Right cardiac atrium (tissue), 5 donors: ENCODE measurements at regions of chrX and their contacts with region 1.

Region 1: GRCh38 chrX:129606918-129607317 is 47.8 kb downstream of the APLN start:
- DNase-seq: peak in 2 of 3 donors; percentile 36 to 66
- ATAC-seq: peak; percentile 50 to 69
- H3K4me3 ChIP-seq: no peak overlapping the region
- H3K27ac ChIP-seq: peak overlapping the region; percentile 17
- H3K4me1 ChIP-seq: peaks cover 3% of the 10 kb centered on the region
- H3K27me3 ChIP-seq: no peaks in the 10 kb centered on the region

Region 2: DNA sequence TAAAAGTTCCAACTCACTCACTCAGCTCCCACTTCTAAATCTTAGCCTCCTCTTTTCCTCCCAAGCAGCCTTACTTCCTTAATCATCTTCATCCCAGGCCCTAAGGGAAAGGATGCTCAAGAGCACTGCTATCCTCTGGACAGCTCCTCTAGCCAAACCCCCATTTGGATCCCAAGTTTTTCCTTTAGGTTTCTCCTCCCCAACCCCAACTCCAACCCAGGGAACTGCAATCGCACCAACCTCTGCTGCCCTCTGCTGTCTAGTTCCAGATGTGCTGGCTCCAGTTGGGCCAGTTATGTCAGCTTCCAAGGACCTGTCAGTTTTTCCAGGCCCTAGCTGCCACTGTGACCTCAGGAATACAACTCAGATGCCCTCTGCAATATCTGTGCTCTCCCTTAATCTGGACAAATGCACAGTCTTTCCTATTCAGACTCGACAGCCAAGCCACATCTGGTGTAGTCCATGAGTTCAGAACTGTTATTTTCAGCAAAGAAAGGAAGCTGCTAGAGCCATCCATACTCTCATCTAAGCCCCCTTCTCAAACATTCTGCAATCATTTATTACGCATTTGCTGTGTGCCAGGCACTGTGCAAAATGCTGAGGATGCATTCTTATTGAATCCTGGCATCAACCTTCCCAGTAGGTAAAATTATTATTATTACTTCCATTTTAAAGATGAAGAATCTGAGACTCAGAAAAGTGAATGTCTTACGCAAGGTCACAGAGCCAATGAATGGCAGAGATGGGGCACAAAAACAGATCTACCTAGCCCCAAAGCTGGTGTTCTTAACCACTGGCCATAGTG is 119.6 kb after region 1 on chrX:
- intact Hi-C with region 1: loop called in 2 of 4 experiments (anchors 5 to 10 kb)
- DNase-seq: peak; percentile 58 to 79 (median 72)
- ATAC-seq: peak; percentile 75 to 83
- H3K4me3 ChIP-seq: no peak overlapping the region
- H3K27ac ChIP-seq: no peak overlapping the region
- H3K4me1 ChIP-seq: no peaks in the 10 kb centered on the region
- H3K27me3 ChIP-seq: no peaks in the 10 kb centered on the region

Region 3: GRCh38 chrX:129823115-129823514 is 216.2 kb after region 1 on chrX:
- intact Hi-C with region 1: loop called in 1 of 4 experiments (anchors 5 kb)
- DNase-seq: peak in 1 of 3 donors; percentile 19
- ATAC-seq: peak in 1 of 2 donors; percentile 58
- H3K4me3 ChIP-seq: no peak overlapping the region
- H3K27ac ChIP-seq: no peak overlapping the region
- H3K4me1 ChIP-seq: no peaks in the 10 kb centered on the region
- H3K27me3 ChIP-seq: no peaks in the 10 kb centered on the region

Region 4: GRCh38 chrX:129843459-129844306 is 236.8 kb after region 1 on chrX and contains the start of gene ZDHHC9:
- intact Hi-C with region 1: loop called in 1 of 4 experiments (anchors 10 kb)
- DNase-seq: peak; percentile 88 to 94 (median 94)
- ATAC-seq: peak; percentile 98 to 99
- H3K4me3 ChIP-seq: peak within 1 kb of the TSS; percentile 68
- H3K27ac ChIP-seq: peak within 1 kb of the TSS; percentile 88
- H3K4me1 ChIP-seq: no peaks in the 10 kb centered on the region
- H3K27me3 ChIP-seq: no peaks in the 10 kb centered on the region
- total RNA-seq, gene ZDHHC9: 9.3 to 16.7 (median 11.3) TPM

Region 5: DNA sequence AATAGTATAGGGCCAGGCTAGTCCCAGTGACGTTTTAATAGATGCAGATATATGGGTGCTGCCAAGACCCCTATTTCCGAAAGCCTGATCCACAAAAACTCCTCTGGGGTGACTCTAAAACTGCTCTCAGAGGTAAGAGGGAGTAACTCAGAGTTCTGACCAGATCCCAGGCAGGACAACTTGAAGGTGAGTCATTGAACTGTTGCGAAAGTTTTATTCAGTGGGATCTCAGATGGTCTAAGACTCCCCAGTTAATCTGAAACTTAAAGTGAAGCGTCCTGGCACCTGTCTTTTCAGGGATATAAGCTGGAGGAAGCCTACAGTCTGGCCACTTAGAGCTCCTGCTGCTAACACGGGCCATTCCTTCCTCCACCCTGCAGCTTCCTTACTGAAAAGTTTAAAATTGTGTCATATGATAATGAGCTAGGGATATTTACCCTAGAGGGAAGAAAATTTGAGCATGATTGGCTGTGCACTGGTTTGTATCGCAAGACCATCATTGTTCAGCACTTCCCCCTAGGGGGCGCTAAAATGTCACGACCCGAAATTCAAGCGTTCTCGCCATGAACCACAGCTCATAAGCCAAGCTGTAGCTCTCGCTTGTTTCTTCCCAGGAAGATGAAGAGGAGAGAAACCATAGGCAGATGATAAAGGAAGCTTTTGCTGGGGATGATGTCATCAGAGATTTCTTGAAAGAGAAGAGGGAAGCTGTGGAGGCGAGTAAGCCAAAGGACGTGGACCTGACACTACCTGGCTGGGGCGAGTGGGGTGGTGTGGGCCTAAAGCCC is 318.6 kb after region 1 on chrX:
- intact Hi-C with region 1: loop called in 1 of 4 experiments (anchors 10 kb)
- DNase-seq: peak; percentile 70 to 80 (median 75)
- ATAC-seq: peak; percentile 79 to 81
- H3K4me3 ChIP-seq: no peak overlapping the region
- H3K27ac ChIP-seq: no peak overlapping the region
- H3K4me1 ChIP-seq: no peaks in the 10 kb centered on the region
- H3K27me3 ChIP-seq: no peaks in the 10 kb centered on the region

Region 6: DNA sequence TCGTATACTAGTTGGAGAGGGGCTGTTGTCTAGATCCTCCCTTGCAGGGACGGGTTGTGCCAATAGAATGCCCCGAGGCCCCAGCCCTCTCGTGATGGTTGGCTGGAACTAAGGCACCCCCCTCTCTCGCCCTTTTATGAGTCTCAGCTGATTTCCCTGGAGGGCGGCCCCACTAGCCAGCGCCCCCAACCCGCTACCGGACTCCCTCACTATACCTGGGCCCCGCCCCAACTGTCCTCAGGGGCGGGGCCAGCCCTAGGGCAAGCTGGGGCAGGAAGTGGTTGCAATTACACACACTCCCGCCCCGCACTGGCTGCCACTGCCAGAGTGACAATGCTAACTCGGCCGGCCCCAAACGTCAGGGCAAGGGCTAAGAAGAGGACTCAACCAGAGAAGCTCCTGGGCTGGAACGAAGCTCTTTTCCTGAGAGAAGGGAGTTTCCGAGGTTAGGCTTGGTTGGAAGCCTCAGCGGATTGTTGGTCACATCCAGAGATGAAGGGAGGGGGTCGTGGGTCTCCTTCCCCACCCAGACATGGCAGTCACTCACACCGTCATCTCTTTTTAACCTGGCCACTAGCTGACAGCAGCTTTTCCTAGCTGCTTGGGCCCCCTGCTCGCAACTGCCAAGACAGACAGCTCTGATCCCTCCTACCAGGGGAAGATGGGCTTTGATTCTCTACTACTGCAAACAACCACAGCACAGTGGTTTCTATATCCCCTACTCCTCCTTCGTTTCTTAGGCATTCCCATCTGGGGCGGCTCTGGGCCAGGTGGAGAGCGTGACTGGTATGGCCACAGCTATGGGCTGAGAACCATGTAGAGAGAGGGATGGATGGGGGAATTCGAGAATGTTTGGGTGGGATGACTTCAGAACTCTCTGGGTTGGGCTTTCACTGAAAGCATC is 354.5 kb after region 1 on chrX:
- intact Hi-C with region 1: no loop called
- DNase-seq: peak; percentile 51 to 84 (median 81)
- ATAC-seq: peak; percentile 72 to 80
- H3K4me3 ChIP-seq: no peak overlapping the region
- H3K27ac ChIP-seq: no peak overlapping the region
- H3K4me1 ChIP-seq: no peaks in the 10 kb centered on the region
- H3K27me3 ChIP-seq: no peaks in the 10 kb centered on the region

Region 7: GRCh38 chrX:130060122-130061069 is 453.5 kb after region 1 on chrX:
- intact Hi-C with region 1: loop called in 2 of 4 experiments (anchors 5 to 10 kb)
- DNase-seq: peak; percentile 74 to 93 (median 90)
- ATAC-seq: peak; percentile 91 to 95
- H3K4me3 ChIP-seq: peak overlapping the region; percentile 71
- H3K27ac ChIP-seq: peak overlapping the region; percentile 39
- H3K4me1 ChIP-seq: no peaks in the 10 kb centered on the region
- H3K27me3 ChIP-seq: no peaks in the 10 kb centered on the region

Region 8: DNA sequence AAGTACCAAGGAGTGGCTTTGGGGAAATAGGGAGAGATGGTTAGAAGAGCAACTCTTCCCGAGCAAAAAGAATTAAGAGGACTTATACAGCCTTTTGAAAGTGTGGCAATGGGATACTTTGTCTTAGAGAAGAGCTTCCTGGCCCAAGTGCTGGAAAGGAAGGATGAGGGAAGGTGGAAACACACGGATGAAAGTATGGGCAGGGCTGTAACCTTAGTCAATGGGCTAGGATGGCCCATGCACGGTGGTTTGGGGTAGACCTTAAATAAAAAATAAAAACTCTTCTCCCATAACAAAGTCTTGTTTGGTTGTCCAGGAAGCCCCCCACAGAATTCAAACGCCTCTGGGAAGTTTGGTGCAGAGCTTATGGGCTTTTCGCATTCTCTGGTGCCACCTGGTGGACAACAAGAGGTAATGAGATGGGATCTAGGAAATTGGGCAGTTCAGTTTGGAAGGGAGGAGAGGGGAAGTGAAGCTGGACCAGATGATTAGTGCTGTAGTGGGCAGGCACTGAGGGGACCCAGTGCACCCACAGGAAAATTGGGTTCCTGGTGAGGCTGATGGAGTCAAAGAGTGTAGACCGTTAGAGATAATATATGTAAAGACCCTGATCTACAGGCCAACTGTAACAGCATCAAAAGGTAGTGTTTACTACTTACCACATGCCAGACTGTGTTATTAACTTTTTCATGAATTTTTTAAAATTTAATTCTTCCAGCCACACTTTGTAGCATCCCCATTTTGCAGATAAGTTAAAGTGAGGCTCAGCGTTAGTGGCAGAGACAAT is 1309.9 kb after region 1 on chrX:
- intact Hi-C with region 1: loop called in 1 of 4 experiments (anchors 10 kb)
- DNase-seq: peak in 1 of 3 donors; percentile 33
- ATAC-seq: peak; percentile 45 to 50
- H3K4me3 ChIP-seq: no peak overlapping the region
- H3K27ac ChIP-seq: no peak overlapping the region
- H3K4me1 ChIP-seq: no peaks in the 10 kb centered on the region
- H3K27me3 ChIP-seq: no peaks in the 10 kb centered on the region